Heart left ventricle (tissue), 16 donors: ENCODE measurements at regions of chr20 and their contacts with region 1.

Region 1: GRCh38 chr20:47205577-47206498 is 150.7 kb downstream of the ZMYND8 start:
- DNase-seq: peak; percentile 43 to 84 (median 69)
- ATAC-seq: peak; percentile 40 to 83 (median 76)
- H3K4me3 ChIP-seq: no peak overlapping the region
- H3K27ac ChIP-seq: no peak overlapping the region
- H3K4me1 ChIP-seq: peaks cover 0 to 9% (median 3%) of the 10 kb centered on the region in 12 donors
- H3K27me3 ChIP-seq: no peaks in the 10 kb centered on the region
- CTCF ChIP-seq: peak; percentile 22 to 83 (median 58)
- POLR2A ChIP-seq: no peak

Region 2: DNA sequence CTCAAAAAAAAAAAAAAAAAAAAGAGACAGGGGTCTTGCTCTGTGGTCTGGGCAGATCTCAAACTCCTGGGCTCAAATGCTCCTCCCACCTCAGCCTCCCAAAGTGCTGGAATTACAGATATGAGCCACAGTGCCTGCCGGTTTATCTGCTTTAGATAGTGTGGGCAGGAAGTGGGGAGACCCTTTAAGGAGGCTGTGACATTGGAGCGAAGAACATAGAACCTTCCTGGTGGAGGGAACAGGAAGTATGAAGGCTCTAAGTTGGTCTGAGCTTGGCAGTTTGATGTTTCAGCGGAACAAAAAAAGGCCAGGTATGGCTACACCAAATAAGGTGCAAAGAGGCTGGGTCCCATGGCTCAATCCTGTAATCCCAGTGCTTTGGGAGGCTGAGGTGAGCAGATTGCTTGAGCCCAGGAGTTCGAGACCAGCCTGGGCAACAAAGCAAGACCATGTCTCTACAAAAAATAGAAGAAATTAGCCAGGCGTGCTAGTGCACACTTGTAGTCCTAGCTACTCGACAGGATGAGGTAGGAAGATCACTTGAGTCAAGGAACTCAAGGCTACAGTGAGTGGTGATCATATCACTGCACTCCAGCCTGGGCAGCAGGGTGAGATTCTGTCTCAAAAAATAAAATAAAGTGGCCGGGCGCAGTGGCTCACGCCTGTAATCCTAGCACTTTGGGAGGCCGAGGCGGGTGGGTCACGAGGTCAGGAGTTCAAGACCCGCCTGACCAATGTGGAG is 159.4 kb after region 1 on chr20:
- intact Hi-C with region 1: loop called in 1 of 10 experiments (anchors 5 kb)
- DNase-seq: no peak
- ATAC-seq: no peak
- H3K4me3 ChIP-seq: no peak overlapping the region
- H3K27ac ChIP-seq: no peak overlapping the region
- H3K4me1 ChIP-seq: peaks cover 7 to 27% (median 17%) of the 10 kb centered on the region in 12 donors
- H3K27me3 ChIP-seq: no peaks in the 10 kb centered on the region
- CTCF ChIP-seq: no peak
- POLR2A ChIP-seq: no peak

Region 3: GRCh38 chr20:47629907-47630306 is 424.1 kb after region 1 on chr20:
- intact Hi-C with region 1: loop called in 1 of 10 experiments (anchors 5 kb)
- DNase-seq: no peak
- ATAC-seq: no peak
- H3K4me3 ChIP-seq: no peak overlapping the region
- H3K27ac ChIP-seq: no peak overlapping the region
- H3K4me1 ChIP-seq: peaks cover 0 to 6% (median 0%) of the 10 kb centered on the region in 12 donors
- H3K27me3 ChIP-seq: no peaks in the 10 kb centered on the region
- CTCF ChIP-seq: no peak
- POLR2A ChIP-seq: no peak